ENCODE measurements at regions of chr1 and their contacts with region 1.

Region 1: GRCh38 chr1:212432706-212433576 is at the start of gene NENF:
- DNase-seq: peak; percentile 98
- ATAC-seq: peak; percentile 99
- H3K4me3 ChIP-seq: peak within 1 kb of the TSS; percentile 76
- H3K27ac ChIP-seq: no peak within 1 kb of the TSS
- H3K4me1 ChIP-seq: peaks cover 23% of the 10 kb centered on the region
- H3K27me3 ChIP-seq: no peaks in the 10 kb centered on the region
- CTCF ChIP-seq: no peak
- total RNA-seq, gene NENF: 153 and 161 TPM in 2 replicates

Region 2: GRCh38 chr1:212375986-212376385 is 57.0 kb before region 1 on chr1:
- CTCF ChIA-PET with region 1: no interaction called
- POLR2A ChIA-PET with region 1: no interaction called
- intact Hi-C with region 1: no loop called
- DNase-seq: no peak
- ATAC-seq: no peak
- H3K4me3 ChIP-seq: no peak overlapping the region
- H3K27ac ChIP-seq: no peak overlapping the region
- H3K4me1 ChIP-seq: no peaks in the 10 kb centered on the region
- H3K27me3 ChIP-seq: no peaks in the 10 kb centered on the region
- CTCF ChIP-seq: no peak

Region 3: GRCh38 chr1:212401838-212402582 is 30.9 kb before region 1 on chr1:
- CTCF ChIA-PET with region 1: no interaction called
- POLR2A ChIA-PET with region 1: no interaction called
- intact Hi-C with region 1: no loop called
- DNase-seq: peak; percentile 85
- ATAC-seq: peak; percentile 88
- H3K4me3 ChIP-seq: no peak overlapping the region
- H3K27ac ChIP-seq: 0 out of 2 replicates have a peak overlapping the region, but pooled peaks have one; percentile 15
- H3K4me1 ChIP-seq: peaks cover 15% of the 10 kb centered on the region
- H3K27me3 ChIP-seq: no peaks in the 10 kb centered on the region
- CTCF ChIP-seq: no peak

Region 4: GRCh38 chr1:212414328-212415106 is 18.4 kb before region 1 on chr1 and contains the start of gene PACC1:
- CTCF ChIA-PET with region 1: no interaction called
- POLR2A ChIA-PET with region 1: no interaction called
- intact Hi-C with region 1: loop called (anchors 1 kb)
- DNase-seq: peak; percentile 98
- ATAC-seq: peak; percentile 92
- H3K4me3 ChIP-seq: peak within 1 kb of the TSS; percentile 79
- H3K27ac ChIP-seq: no peak within 1 kb of the TSS
- H3K4me1 ChIP-seq: peaks cover 10% of the 10 kb centered on the region
- H3K27me3 ChIP-seq: no peaks in the 10 kb centered on the region
- CTCF ChIP-seq: no peak
- total RNA-seq, gene PACC1: 18.7 and 37.5 TPM in 2 replicates

Region 5: GRCh38 chr1:212488397-212489283 is 55.7 kb after region 1 on chr1:
- CTCF ChIA-PET with region 1: no interaction called
- POLR2A ChIA-PET with region 1: no interaction called
- intact Hi-C with region 1: no loop called
- DNase-seq: peak; percentile 76
- ATAC-seq: no peak; the same call in 1 of the 2 replicates
- H3K4me3 ChIP-seq: no peak overlapping the region
- H3K27ac ChIP-seq: peak overlapping the region; percentile 92
- H3K4me1 ChIP-seq: peaks cover 49% of the 10 kb centered on the region
- H3K27me3 ChIP-seq: no peaks in the 10 kb centered on the region
- CTCF ChIP-seq: no peak

Region 6: DNA sequence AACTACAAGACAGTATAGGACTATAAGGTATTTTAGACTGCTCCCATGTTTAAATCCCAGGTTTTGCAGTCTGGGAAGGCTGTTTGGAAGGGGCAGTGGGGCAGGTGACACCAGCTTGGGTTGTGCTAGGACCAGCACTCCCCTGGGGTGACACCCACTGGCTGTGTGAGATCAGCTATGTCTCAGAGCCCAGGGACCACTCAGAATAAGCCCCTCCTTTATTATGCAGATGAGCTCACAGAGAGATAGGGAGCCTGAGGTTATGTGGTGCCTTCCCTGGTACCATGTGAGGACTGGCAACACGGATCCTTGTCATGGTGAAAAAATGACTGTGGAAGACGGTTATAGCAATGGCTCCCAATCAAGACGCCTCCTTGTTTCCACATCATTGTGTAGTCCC is 70.8 kb after region 1 on chr1:
- CTCF ChIA-PET with region 1: no interaction called
- POLR2A ChIA-PET with region 1: no interaction called
- intact Hi-C with region 1: no loop called
- DNase-seq: no peak
- ATAC-seq: peak; percentile 38
- H3K4me3 ChIP-seq: no peak overlapping the region
- H3K27ac ChIP-seq: no peak overlapping the region
- H3K4me1 ChIP-seq: peaks cover 1% of the 10 kb centered on the region; the same call in 1 of the 2 replicates
- H3K27me3 ChIP-seq: no peaks in the 10 kb centered on the region
- CTCF ChIP-seq: no peak